A549 (cell line): ENCODE measurements at regions of chr7 and their contacts with region 1.

Region 1: GRCh38 chr7:44858161-44858560 is 10.3 kb upstream of the H2AZ2 start:
- DNase-seq: no peak
- ATAC-seq: no peak
- H3K4me3 ChIP-seq: no peak overlapping the region
- H3K27ac ChIP-seq: no peak overlapping the region
- H3K4me1 ChIP-seq: peaks cover 11% of the 10 kb centered on the region; the same call in 1 of the 3 replicates
- CTCF ChIP-seq: no peak
- EP300 ChIP-seq: no peak
- POLR2A ChIP-seq: no peak
- RAD21 ChIP-seq: no peak

Region 2: DNA sequence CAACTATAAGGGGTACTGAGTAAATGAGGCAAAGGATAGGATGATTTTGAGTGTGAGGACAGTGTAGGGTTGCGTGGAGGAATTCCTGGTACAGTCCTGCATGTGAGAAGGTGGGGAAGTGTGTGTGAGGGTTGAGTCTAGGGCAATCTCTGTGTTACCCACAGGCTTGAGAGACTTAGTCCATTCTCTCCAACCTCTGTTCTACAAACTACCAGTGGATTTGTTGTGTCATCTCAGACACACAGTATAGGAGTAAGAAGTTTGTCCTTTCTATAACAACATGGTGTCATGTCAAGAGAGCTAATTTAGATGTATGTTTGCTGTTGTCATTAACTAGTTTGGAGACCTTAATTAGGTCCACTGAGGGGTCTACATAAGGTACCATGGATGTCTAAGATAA is 14.6 kb after region 1 on chr7:
- CTCF ChIA-PET with region 1: interaction called, 14 read pairs
- POLR2A ChIA-PET with region 1: no interaction called
- DNase-seq: no peak
- ATAC-seq: peak; percentile 54 to 63; a peak in 4 of 6 replicates
- H3K4me3 ChIP-seq: no peak overlapping the region
- H3K27ac ChIP-seq: no peak overlapping the region; a peak in 1 of 6 replicates
- H3K4me1 ChIP-seq: peaks cover 12% of the 10 kb centered on the region
- CTCF ChIP-seq: no peak
- EP300 ChIP-seq: no peak
- POLR2A ChIP-seq: no peak
- RAD21 ChIP-seq: no peak

Region 3: GRCh38 chr7:44962483-44963251 is 104.5 kb after region 1 on chr7:
- CTCF ChIA-PET with region 1: interaction called, 10 read pairs
- POLR2A ChIA-PET with region 1: no interaction called
- DNase-seq: no peak
- ATAC-seq: no peak; a peak in 1 of 6 replicates
- H3K4me3 ChIP-seq: no peak overlapping the region
- H3K27ac ChIP-seq: no peak overlapping the region
- H3K4me1 ChIP-seq: no peaks in the 10 kb centered on the region
- CTCF ChIP-seq: no peak
- EP300 ChIP-seq: no peak
- POLR2A ChIP-seq: no peak
- RAD21 ChIP-seq: no peak